Calu3 (cell line): ENCODE measurements at regions of chr12 and their contacts with region 1.

Region 1: DNA sequence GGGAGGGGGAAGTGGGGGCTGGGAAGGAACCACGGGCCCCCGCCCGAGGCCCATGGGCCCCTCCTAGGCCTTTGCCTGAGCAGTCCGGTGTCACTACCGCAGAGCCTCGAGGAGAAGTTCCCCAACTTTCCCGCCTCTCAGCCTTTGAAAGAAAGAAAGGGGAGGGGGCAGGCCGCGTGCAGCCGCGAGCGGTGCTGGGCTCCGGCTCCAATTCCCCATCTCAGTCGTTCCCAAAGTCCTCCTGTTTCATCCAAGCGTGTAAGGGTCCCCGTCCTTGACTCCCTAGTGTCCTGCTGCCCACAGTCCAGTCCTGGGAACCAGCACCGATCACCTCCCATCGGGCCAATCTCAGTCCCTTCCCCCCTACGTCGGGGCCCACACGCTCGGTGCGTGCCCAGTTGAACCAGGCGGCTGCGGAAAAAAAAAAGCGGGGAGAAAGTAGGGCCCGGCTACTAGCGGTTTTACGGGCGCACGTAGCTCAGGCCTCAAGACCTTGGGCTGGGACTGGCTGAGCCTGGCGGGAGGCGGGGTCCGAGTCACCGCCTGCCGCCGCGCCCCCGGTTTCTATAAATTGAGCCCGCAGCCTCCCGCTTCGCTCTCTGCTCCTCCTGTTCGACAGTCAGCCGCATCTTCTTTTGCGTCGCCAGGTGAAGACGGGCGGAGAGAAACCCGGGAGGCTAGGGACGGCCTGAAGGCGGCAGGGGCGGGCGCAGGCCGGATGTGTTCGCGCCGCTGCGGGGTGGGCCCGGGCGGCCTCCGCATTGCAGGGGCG is at the start of gene GAPDH:
- DNase-seq: peak; percentile 93
- H3K4me3 Mint-ChIP-seq: peak within 1 kb of the TSS; percentile 81
- H3K27ac Mint-ChIP-seq: peak within 1 kb of the TSS; percentile 89
- H3K4me1 Mint-ChIP-seq: peaks cover 27% of the 10 kb centered on the region
- H3K27me3 Mint-ChIP-seq: no peaks in the 10 kb centered on the region
- CTCF ChIP-seq: no peak
- total RNA-seq, gene GAPDH: 2,412 and 2,552 TPM in 2 replicates

Region 2: GRCh38 chr12:6341417-6342139 is 192.5 kb before region 1 on chr12 and contains the start of gene TNFRSF1A:
- CTCF ChIA-PET with region 1: interaction called, 4 read pairs
- intact Hi-C with region 1: loop called (anchors 10 kb)
- DNase-seq: peak; percentile 65
- H3K4me3 Mint-ChIP-seq: no peak within 1 kb of the TSS
- H3K27ac Mint-ChIP-seq: no peak within 1 kb of the TSS
- H3K4me1 Mint-ChIP-seq: peaks cover 45% of the 10 kb centered on the region
- H3K27me3 Mint-ChIP-seq: no peaks in the 10 kb centered on the region
- CTCF ChIP-seq: no peak
- total RNA-seq, gene TNFRSF1A: 76.7 and 79.3 TPM in 2 replicates

Region 3: GRCh38 chr12:6367065-6367968 is 166.8 kb before region 1 on chr12:
- CTCF ChIA-PET with region 1: no interaction called
- intact Hi-C with region 1: no loop called
- DNase-seq: no peak
- H3K4me3 Mint-ChIP-seq: no peak overlapping the region
- H3K27ac Mint-ChIP-seq: no peak overlapping the region
- H3K4me1 Mint-ChIP-seq: peaks cover 40% of the 10 kb centered on the region
- H3K27me3 Mint-ChIP-seq: no peaks in the 10 kb centered on the region
- CTCF ChIP-seq: no peak

Region 4: DNA sequence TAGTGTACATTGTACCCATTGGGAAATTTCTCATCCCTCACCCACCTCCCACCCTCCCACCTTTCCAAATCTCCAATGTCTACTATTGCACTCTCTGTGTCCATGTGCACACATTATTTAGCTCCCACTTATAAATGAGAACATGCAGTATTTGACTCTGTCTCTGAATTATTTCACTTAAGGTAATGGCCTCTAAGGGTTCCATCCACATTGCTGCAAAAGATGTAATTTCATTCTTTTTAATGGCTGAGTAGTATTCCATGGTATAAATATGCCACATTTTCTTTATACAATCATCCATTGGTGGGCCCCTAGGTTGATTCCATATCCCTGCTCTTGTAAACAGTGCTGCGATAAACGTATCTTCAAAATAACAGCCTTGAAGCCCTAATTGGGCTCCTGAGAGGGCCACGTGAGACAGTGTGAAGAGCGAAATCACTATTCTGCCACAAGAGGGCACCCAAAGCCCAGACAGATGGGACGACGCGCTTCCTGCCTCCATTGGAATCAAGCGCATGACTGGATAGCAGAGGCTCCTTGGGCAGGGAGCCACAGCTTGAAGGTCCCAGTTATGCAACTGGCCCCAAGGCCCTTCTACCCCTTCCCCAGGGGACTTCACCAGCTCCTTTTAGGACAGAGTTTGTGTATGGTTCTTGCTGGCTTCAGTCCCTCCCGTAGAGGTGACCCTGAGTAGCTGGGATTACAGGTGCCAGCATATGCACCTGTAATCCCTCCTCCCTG is 110.7 kb before region 1 on chr12:
- CTCF ChIA-PET with region 1: interaction called, 11 read pairs
- intact Hi-C with region 1: loop called (anchors 5 kb)
- DNase-seq: peak; percentile 78
- H3K4me3 Mint-ChIP-seq: no peak overlapping the region
- H3K27ac Mint-ChIP-seq: no peak overlapping the region
- H3K4me1 Mint-ChIP-seq: peaks cover 5% of the 10 kb centered on the region
- H3K27me3 Mint-ChIP-seq: no peaks in the 10 kb centered on the region
- CTCF ChIP-seq: peak; percentile 76

Region 5: GRCh38 chr12:6493497-6494257 is 40.4 kb before region 1 on chr12 and contains the start of gene NCAPD2:
- CTCF ChIA-PET with region 1: interaction called, 9 read pairs
- intact Hi-C with region 1: loop called (anchors 2 kb)
- DNase-seq: peak; percentile 94
- H3K4me3 Mint-ChIP-seq: peak within 1 kb of the TSS; percentile 95
- H3K27ac Mint-ChIP-seq: peak within 1 kb of the TSS; percentile 96
- H3K4me1 Mint-ChIP-seq: no peaks in the 10 kb centered on the region
- H3K27me3 Mint-ChIP-seq: no peaks in the 10 kb centered on the region
- CTCF ChIP-seq: no peak
- total RNA-seq, gene NCAPD2: 78.0 and 94.7 TPM in 2 replicates

Region 6: DNA sequence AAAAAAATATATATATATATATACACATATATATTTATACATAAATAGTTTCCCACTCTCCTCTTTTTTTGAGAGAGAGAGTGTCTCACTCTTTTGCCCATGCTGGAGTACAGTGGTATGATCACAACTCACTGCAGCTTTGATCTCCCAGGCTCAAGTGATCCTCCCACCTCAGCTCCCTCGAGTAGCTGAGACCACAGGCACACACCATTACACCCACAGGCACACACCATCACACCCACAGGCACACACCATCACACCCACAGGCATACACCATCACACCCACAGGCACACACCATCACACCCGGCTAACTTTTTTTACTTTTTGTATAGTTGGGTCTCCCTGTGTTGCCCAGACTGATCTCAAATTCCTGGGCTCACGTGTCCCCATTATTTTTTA is 13.9 kb before region 1 on chr12:
- CTCF ChIA-PET with region 1: no interaction called
- intact Hi-C with region 1: no loop called
- DNase-seq: no peak
- H3K4me3 Mint-ChIP-seq: no peak overlapping the region
- H3K27ac Mint-ChIP-seq: no peak overlapping the region
- H3K4me1 Mint-ChIP-seq: no peaks in the 10 kb centered on the region
- H3K27me3 Mint-ChIP-seq: no peaks in the 10 kb centered on the region
- CTCF ChIP-seq: no peak

Region 7: GRCh38 chr12:6647083-6647604 is 113.0 kb after region 1 on chr12 and contains the start of gene ACRBP:
- CTCF ChIA-PET with region 1: no interaction called
- intact Hi-C with region 1: no loop called
- DNase-seq: no peak
- H3K4me3 Mint-ChIP-seq: no peak within 1 kb of the TSS
- H3K27ac Mint-ChIP-seq: peak within 1 kb of the TSS; percentile 60
- H3K4me1 Mint-ChIP-seq: no peaks in the 10 kb centered on the region
- H3K27me3 Mint-ChIP-seq: peaks cover 10% of the 10 kb centered on the region
- CTCF ChIP-seq: no peak
- total RNA-seq, gene ACRBP: 2.9 and 4.1 TPM in 2 replicates